ENCODE measurements at regions of chr12 and their contacts with region 1.

Region 1: DNA sequence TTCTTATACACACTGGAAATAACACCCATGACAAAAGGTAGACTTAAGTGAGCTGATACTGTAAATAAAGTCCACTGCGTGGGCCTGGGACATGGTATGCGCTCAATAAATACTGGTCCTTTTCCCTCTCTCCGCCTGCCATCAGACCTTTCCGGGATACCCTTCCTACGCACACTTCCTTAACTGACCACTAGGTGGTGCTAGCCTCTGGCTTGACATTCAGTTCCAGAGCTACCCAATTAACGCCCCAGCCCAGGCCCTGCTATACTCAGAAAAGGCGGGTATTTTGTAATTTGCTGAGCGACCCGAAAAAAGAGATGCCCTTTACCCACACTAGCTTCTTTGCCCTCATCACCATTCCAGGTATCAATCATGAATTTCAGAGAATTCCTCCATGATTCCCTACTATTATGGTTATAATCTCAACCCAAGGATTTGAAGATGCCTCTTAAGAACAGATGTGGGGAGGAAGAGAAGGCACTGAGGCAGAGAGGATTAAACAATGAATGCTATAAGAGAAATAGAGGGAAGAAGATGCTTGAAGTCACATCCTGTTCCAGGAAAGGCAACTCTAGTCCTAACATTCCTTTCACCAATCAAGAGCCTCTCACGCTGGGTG is 3.9 kb upstream of the LRP1 start:
- DNase-seq: no peak
- H3K4me3 ChIP-seq: no peak overlapping the region
- H3K27me3 ChIP-seq: no peaks in the 10 kb centered on the region
- CTCF ChIP-seq: peak; percentile 97

Region 2: DNA sequence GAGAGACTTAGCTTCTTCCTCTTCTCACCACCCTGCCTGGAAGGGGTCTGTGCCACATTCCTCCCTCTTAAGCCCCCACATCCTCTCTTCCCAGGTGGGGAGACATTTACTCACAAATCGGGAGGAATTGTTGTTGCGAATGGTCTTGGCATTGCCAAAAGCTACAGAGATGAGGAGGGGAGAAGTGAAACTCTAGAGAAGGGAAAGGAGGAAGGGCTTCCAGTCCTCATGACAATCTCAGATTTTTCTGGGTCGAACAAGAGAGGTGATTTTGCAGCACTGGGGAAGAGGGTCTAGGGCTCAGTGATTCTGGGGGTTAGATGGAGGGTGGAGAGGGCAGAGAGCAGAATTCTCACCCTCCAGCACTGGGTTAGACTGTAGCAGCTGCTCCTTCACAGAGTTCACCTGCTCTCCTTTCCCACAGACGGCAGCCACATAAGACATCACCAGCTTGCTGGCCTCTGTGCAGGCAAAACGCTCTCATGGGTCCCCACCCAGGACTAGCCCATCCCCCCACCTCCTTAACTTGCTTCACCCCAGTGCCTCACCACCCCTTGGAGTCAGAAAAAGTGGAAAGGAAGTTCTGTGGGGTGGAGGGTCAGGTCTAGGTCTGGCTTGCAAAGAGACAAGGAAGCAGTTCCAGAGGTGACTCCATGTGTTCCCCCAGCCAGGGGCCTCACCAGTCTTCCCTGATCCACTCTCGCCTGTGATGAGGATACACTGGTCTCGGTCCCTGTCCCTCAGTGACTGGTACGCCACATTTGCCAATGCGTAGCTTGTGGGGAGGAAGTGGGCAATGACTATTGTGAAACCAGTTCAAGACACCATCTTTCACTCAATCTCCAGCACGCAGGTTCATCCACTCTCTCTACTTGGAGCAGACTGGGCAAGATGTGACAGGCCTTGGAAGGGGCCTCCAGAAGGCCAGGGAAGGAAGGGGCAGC is 77.1 kb before region 1 on chr12:
- CTCF ChIA-PET with region 1: no interaction called
- POLR2A ChIA-PET with region 1: no interaction called
- DNase-seq: no peak
- H3K4me3 ChIP-seq: no peak overlapping the region
- H3K27me3 ChIP-seq: peaks cover 6% of the 10 kb centered on the region
- CTCF ChIP-seq: no peak

Region 3: GRCh38 chr12:57088459-57089248 is 35.7 kb before region 1 on chr12 and contains the start of gene NAB2:
- CTCF ChIA-PET with region 1: interaction called, 13 read pairs
- POLR2A ChIA-PET with region 1: interaction called, 4 read pairs
- DNase-seq: peak; percentile 80
- H3K4me3 ChIP-seq: peak within 1 kb of the TSS; percentile 96
- H3K27me3 ChIP-seq: no peaks in the 10 kb centered on the region
- CTCF ChIP-seq: no peak
- polyA plus RNA-seq, gene NAB2: 41.7 and 50.2 TPM in 2 replicates

Region 4: GRCh38 chr12:57151741-57152630 is 27.6 kb after region 1 on chr12:
- CTCF ChIA-PET with region 1: interaction called, 16 read pairs
- POLR2A ChIA-PET with region 1: interaction called, 13 read pairs
- DNase-seq: no peak
- H3K4me3 ChIP-seq: no peak overlapping the region
- H3K27me3 ChIP-seq: no peaks in the 10 kb centered on the region
- CTCF ChIP-seq: no peak

Region 5: GRCh38 chr12:57175428-57176138 is 51.2 kb after region 1 on chr12:
- CTCF ChIA-PET with region 1: interaction called, 357 read pairs
- POLR2A ChIA-PET with region 1: no interaction called
- DNase-seq: no peak
- H3K4me3 ChIP-seq: no peak overlapping the region
- H3K27me3 ChIP-seq: no peaks in the 10 kb centered on the region
- CTCF ChIP-seq: peak; percentile 89

Region 6: GRCh38 chr12:57182921-57183790 is 58.8 kb after region 1 on chr12:
- CTCF ChIA-PET with region 1: interaction called, 357 read pairs
- POLR2A ChIA-PET with region 1: interaction called, 5 read pairs
- DNase-seq: no peak
- H3K4me3 ChIP-seq: no peak overlapping the region
- H3K27me3 ChIP-seq: no peaks in the 10 kb centered on the region
- CTCF ChIP-seq: peak; percentile 84